ENCODE measurements at regions of chr14 and their contacts with region 1.

Region 1: DNA sequence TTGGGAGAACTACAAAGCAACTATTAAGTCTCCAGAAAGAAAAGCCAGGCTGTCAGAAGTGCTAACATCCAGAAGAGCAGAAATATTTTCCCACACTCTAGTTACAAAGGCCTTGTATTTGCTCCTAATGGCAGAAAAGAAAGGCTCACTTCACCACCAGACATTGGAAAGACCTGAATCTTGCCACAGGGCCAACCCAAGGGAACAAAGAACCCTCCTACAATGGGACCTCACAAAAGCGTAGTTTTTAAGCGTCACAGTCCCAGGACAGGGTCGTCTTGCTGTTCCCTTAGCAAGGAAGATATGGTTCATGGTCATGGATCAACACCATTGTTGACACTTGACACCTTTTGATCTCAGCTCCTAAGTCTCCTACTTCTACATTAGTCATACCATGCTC is 119.1 kb downstream of the RPS29 start:
- DNase-seq: no peak
- H3K4me3 ChIP-seq: no peak overlapping the region
- H3K27ac ChIP-seq: no peak overlapping the region
- H3K4me1 ChIP-seq: no peaks in the 10 kb centered on the region
- H3K27me3 ChIP-seq: no peaks in the 10 kb centered on the region
- CTCF ChIP-seq: no peak

Region 2: GRCh38 chr14:47993883-47994282 is 1473.2 kb before region 1 on chr14:
- CTCF ChIA-PET with region 1: interaction called, 11 read pairs
- POLR2A ChIA-PET with region 1: no interaction called
- intact Hi-C with region 1: no loop called
- DNase-seq: no peak
- H3K4me3 ChIP-seq: no peak overlapping the region
- H3K27ac ChIP-seq: no peak overlapping the region
- H3K4me1 ChIP-seq: no peaks in the 10 kb centered on the region
- H3K27me3 ChIP-seq: no peaks in the 10 kb centered on the region
- CTCF ChIP-seq: no peak